ENCODE measurements at regions of chr6 and their contacts with region 1.

Region 1: DNA sequence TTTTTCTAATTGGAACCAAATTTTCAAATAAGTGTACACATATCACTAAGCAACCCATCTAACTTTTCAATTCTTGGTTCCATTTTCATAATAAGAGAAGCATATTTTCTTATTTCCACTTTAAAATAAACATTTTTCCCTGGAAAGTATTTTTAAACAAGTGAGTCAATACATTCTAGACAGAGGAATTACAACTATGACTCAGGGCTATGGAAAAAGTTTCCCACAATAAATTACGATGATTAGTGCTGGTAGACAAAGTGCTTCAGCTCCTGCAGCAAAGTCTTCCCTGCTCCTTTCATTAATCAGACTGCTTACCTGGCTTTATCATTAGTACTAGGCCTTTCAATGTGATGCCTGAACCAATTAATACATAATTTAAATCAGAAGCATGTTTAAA is 322.5 kb downstream of the HACE1 start:
- DNase-seq: no peak
- H3K4me3 Mint-ChIP-seq: no peak overlapping the region
- H3K27ac Mint-ChIP-seq: no peak overlapping the region
- H3K4me1 Mint-ChIP-seq: no peaks in the 10 kb centered on the region
- H3K27me3 Mint-ChIP-seq: peaks cover 2% of the 10 kb centered on the region

Region 2: GRCh38 chr6:104449918-104450317 is 87.3 kb before region 1 on chr6:
- CTCF ChIA-PET with region 1: no interaction called
- POLR2A ChIA-PET with region 1: no interaction called
- DNase-seq: no peak
- H3K4me3 Mint-ChIP-seq: no peak overlapping the region
- H3K27ac Mint-ChIP-seq: no peak overlapping the region
- H3K4me1 Mint-ChIP-seq: no peaks in the 10 kb centered on the region
- H3K27me3 Mint-ChIP-seq: no peaks in the 10 kb centered on the region

Region 3: GRCh38 chr6:104505838-104506237 is 31.3 kb before region 1 on chr6:
- CTCF ChIA-PET with region 1: no interaction called
- POLR2A ChIA-PET with region 1: no interaction called
- DNase-seq: no peak
- H3K4me3 Mint-ChIP-seq: no peak overlapping the region
- H3K27ac Mint-ChIP-seq: no peak overlapping the region
- H3K4me1 Mint-ChIP-seq: no peaks in the 10 kb centered on the region
- H3K27me3 Mint-ChIP-seq: peaks cover 2% of the 10 kb centered on the region

Region 4: DNA sequence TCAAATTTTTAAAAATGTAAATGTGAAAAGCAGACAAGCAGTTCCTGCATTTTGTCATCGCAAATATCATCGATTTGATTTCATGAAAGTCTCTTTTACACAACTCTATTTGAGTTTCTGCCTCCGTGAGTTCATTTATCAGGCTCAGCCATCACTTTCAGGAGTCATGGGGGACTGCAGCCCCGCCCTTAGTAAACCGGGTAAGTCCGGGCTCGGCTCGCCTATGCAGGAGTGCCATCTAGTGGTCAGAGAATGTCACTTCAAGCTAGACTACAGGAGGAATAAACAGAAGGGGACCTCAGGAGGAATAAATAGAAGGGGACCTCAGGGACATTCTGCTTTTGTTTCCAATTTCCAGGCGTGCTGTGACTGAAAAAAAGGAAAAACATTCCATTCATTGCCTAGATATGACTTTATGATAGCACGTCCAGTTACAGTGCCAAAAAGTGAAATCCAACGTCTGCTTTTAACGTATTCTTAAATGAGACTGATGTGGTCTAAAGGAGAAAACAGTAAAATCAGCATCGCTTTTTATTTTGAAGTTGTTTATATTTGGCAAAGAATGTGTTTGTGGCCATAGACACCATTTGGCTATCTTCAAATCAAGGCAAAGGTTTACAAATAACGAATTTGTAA is 11.4 kb before region 1 on chr6:
- CTCF ChIA-PET with region 1: interaction called, 22 read pairs
- POLR2A ChIA-PET with region 1: no interaction called
- DNase-seq: peak; percentile 72
- H3K4me3 Mint-ChIP-seq: no peak overlapping the region
- H3K27ac Mint-ChIP-seq: no peak overlapping the region
- H3K4me1 Mint-ChIP-seq: no peaks in the 10 kb centered on the region
- H3K27me3 Mint-ChIP-seq: peaks cover 10% of the 10 kb centered on the region